Activated CD4-positive, alpha-beta memory T cell treated with anti-CD3 and anti-CD28 coated beads for 36 hours (primary cell): ENCODE measurements at regions of chr6 and their contacts with region 1.

Region 1: GRCh38 chr6:127516666-127517273 is 2.4 kb downstream of the MTCL3 start:
- DNase-seq: peak; percentile 72
- H3K4me3 Mint-ChIP-seq: peak overlapping the region; percentile 85
- H3K27ac Mint-ChIP-seq: peak overlapping the region; percentile 34
- H3K4me1 Mint-ChIP-seq: peaks cover 32% of the 10 kb centered on the region
- H3K27me3 Mint-ChIP-seq: peaks cover 15% of the 10 kb centered on the region

Region 2: GRCh38 chr6:127219869-127220268 is 296.9 kb before region 1 on chr6:
- CTCF ChIA-PET with region 1: no interaction called
- POLR2A ChIA-PET with region 1: no interaction called
- intact Hi-C with region 1: no loop called
- DNase-seq: no peak
- H3K4me3 Mint-ChIP-seq: no peak overlapping the region
- H3K27ac Mint-ChIP-seq: no peak overlapping the region
- H3K4me1 Mint-ChIP-seq: no peaks in the 10 kb centered on the region
- H3K27me3 Mint-ChIP-seq: peaks cover 11% of the 10 kb centered on the region

Region 3: GRCh38 chr6:127302728-127303660 is 213.8 kb before region 1 on chr6:
- CTCF ChIA-PET with region 1: interaction called, 18 read pairs
- POLR2A ChIA-PET with region 1: no interaction called
- intact Hi-C with region 1: loop called (anchors 1 kb)
- DNase-seq: peak; percentile 41
- H3K4me3 Mint-ChIP-seq: no peak overlapping the region
- H3K27ac Mint-ChIP-seq: peak overlapping the region; percentile 15
- H3K4me1 Mint-ChIP-seq: peaks cover 32% of the 10 kb centered on the region
- H3K27me3 Mint-ChIP-seq: no peaks in the 10 kb centered on the region

Region 4: GRCh38 chr6:127464881-127465459 is 51.8 kb before region 1 on chr6:
- CTCF ChIA-PET with region 1: interaction called, 30 read pairs
- POLR2A ChIA-PET with region 1: no interaction called
- intact Hi-C with region 1: loop called (anchors 2 kb)
- DNase-seq: peak; percentile 75
- H3K4me3 Mint-ChIP-seq: no peak overlapping the region
- H3K27ac Mint-ChIP-seq: no peak overlapping the region
- H3K4me1 Mint-ChIP-seq: peaks cover 2% of the 10 kb centered on the region
- H3K27me3 Mint-ChIP-seq: no peaks in the 10 kb centered on the region

Region 5: GRCh38 chr6:127533011-127533410 is 16.2 kb after region 1 on chr6:
- CTCF ChIA-PET with region 1: interaction called, 97 read pairs
- POLR2A ChIA-PET with region 1: no interaction called
- intact Hi-C with region 1: no loop called
- DNase-seq: no peak
- H3K4me3 Mint-ChIP-seq: no peak overlapping the region
- H3K27ac Mint-ChIP-seq: no peak overlapping the region
- H3K4me1 Mint-ChIP-seq: no peaks in the 10 kb centered on the region
- H3K27me3 Mint-ChIP-seq: peaks cover 21% of the 10 kb centered on the region

Region 6: GRCh38 chr6:128520436-128521281 is 1003.9 kb after region 1 on chr6 and contains the start of gene PTPRK:
- CTCF ChIA-PET with region 1: no interaction called
- POLR2A ChIA-PET with region 1: no interaction called
- intact Hi-C with region 1: loop called (anchors 5 kb)
- DNase-seq: peak; percentile 92
- H3K4me3 Mint-ChIP-seq: peak within 1 kb of the TSS; percentile 85
- H3K27ac Mint-ChIP-seq: peak within 1 kb of the TSS; percentile 23
- H3K4me1 Mint-ChIP-seq: peaks cover 9% of the 10 kb centered on the region
- H3K27me3 Mint-ChIP-seq: peaks cover 55% of the 10 kb centered on the region
- total RNA-seq, gene PTPRK: 1.8 to 2.2 TPM